Esophagus squamous epithelium (tissue), 5 donors: ENCODE measurements at regions of chr14 and their contacts with region 1.

Region 1: DNA sequence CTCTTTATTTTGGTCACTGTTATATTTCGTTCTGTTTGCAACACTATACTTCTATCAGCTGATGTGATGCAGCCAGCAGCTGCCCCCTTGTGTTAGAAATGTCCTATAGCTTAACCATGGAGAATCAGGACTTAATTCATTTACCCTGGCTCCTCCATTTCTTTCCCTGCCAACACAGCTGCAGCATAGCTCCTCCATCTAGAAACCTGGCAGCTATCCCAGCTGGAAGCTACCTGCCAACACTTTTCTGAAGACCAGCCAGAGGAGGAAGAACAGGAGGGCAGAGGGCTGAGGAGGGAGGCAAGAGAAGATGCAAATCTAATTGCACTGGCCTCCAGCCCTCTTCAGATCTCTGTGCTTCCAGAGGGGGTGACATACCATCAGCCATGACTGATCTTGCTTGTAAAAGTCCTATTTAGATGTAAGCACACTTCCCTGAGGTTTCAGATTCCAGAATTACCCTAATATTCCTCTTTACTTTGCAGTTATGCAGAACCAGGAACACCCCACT is 156.8 kb upstream of the TMEM260 start:
- DNase-seq: no peak
- H3K4me3 ChIP-seq: no peak overlapping the region
- H3K27ac ChIP-seq: no peak overlapping the region
- H3K4me1 ChIP-seq: peaks cover 0 to 20% (median 0%) of the 10 kb centered on the region in 3 donors
- H3K27me3 ChIP-seq: no peaks in the 10 kb centered on the region
- CTCF ChIP-seq: peak; percentile 21 to 81 (median 65)
- POLR2A ChIP-seq: no peak

Region 2: GRCh38 chr14:55707365-55707804 is 715.4 kb before region 1 on chr14:
- intact Hi-C with region 1: loop called (anchors 10 kb)
- DNase-seq: no peak
- H3K4me3 ChIP-seq: no peak overlapping the region
- H3K27ac ChIP-seq: no peak overlapping the region
- H3K4me1 ChIP-seq: peaks cover 0 to 26% (median 9%) of the 10 kb centered on the region in 3 donors
- H3K27me3 ChIP-seq: no peaks in the 10 kb centered on the region
- CTCF ChIP-seq: peak in 5 of 6 experiments; percentile 50 to 77 (median 56)
- POLR2A ChIP-seq: no peak

Region 3: GRCh38 chr14:56247468-56248200 is 175.1 kb before region 1 on chr14:
- intact Hi-C with region 1: no loop called
- DNase-seq: no peak
- H3K4me3 ChIP-seq: no peak overlapping the region
- H3K27ac ChIP-seq: no peak overlapping the region
- H3K4me1 ChIP-seq: peaks cover 0 to 10% (median 0%) of the 10 kb centered on the region in 3 donors
- H3K27me3 ChIP-seq: no peaks in the 10 kb centered on the region
- CTCF ChIP-seq: peak in 4 of 6 experiments; percentile 19 to 51 (median 25)
- POLR2A ChIP-seq: no peak

Region 4: GRCh38 chr14:56491299-56492285 is 68.8 kb after region 1 on chr14:
- intact Hi-C with region 1: no loop called
- DNase-seq: no peak
- H3K4me3 ChIP-seq: no peak overlapping the region
- H3K27ac ChIP-seq: no peak overlapping the region
- H3K4me1 ChIP-seq: peaks cover 0 to 5% (median 0%) of the 10 kb centered on the region in 3 donors
- H3K27me3 ChIP-seq: peaks cover 0 to 5% (median 0%) of the 10 kb centered on the region in 4 donors
- CTCF ChIP-seq: peak in 5 of 6 experiments; percentile 43 to 58 (median 49)
- POLR2A ChIP-seq: no peak